ENCODE measurements at regions of chr5 and their contacts with region 1.

Region 1: DNA sequence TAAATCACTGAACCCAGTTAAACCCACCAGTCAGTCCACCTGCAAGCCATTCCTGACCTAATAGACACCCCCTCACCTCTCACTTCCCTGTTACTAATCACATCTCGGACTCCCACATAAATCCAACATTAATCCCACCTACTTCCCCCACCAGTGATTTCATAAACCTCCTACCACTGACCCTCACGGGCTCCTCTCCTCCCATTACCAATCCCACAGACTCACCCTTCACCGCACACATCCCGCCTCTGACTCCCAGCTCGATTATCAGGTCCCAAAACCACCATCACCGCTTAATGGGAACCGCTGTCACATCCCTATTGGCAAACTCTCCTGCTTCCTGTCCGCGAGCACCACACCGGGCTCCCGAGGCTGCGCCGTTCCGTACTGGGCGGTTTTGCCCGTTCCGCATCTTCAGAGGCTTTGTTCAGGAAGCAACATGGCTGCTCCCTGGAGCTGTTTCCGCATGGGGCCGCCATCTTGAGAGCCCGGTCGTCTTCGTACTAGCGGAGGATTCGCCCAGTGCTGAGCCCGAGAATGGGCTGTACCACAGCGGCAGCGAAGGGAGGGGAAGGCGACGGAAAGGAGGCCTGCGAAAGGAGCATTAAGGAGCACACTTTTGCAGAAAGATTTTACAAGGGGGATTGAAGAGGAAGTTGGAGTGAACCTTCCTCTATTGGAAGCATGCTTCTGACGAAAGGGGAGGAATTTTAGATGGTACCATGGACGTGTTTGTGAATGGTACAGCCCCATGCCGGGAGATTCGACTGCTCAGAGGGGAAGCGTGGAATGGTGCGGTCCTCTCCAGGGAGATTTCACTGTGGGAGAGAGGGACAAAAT is at the start of gene ZNF300:
- DNase-seq: peak; percentile 93
- H3K4me3 ChIP-seq: peak within 1 kb of the TSS; percentile 17 to 68 (median 66)
- H3K27ac ChIP-seq: peak within 1 kb of the TSS; percentile 97
- H3K4me1 ChIP-seq: no peaks in the 10 kb centered on the region
- H3K27me3 ChIP-seq: no peaks in the 10 kb centered on the region
- CTCF ChIP-seq: no peak
- POLR2A ChIP-seq: peak; percentile 51
- total RNA-seq, gene ZNF300: 9.6 and 10.2 TPM in 2 replicates

Region 2: GRCh38 chr5:150946351-150946905 is 41.7 kb after region 1 on chr5:
- CTCF ChIA-PET with region 1: no interaction called
- POLR2A ChIA-PET with region 1: no interaction called
- dilution Hi-C with region 1: no loop called
- intact Hi-C with region 1: loop called (anchors 1 kb)
- DNase-seq: peak; percentile 88
- H3K4me3 ChIP-seq: peak overlapping the region; percentile 49 to 85 (median 83)
- H3K27ac ChIP-seq: peak overlapping the region; percentile 85
- H3K4me1 ChIP-seq: no peaks in the 10 kb centered on the region
- H3K27me3 ChIP-seq: no peaks in the 10 kb centered on the region
- CTCF ChIP-seq: no peak
- POLR2A ChIP-seq: peak; percentile 47

Measured in endothelial cell of umbilical vein (primary cell).